Heart left ventricle (tissue), 16 donors: ENCODE measurements at regions of chr11 and their contacts with region 1.

Region 1: DNA sequence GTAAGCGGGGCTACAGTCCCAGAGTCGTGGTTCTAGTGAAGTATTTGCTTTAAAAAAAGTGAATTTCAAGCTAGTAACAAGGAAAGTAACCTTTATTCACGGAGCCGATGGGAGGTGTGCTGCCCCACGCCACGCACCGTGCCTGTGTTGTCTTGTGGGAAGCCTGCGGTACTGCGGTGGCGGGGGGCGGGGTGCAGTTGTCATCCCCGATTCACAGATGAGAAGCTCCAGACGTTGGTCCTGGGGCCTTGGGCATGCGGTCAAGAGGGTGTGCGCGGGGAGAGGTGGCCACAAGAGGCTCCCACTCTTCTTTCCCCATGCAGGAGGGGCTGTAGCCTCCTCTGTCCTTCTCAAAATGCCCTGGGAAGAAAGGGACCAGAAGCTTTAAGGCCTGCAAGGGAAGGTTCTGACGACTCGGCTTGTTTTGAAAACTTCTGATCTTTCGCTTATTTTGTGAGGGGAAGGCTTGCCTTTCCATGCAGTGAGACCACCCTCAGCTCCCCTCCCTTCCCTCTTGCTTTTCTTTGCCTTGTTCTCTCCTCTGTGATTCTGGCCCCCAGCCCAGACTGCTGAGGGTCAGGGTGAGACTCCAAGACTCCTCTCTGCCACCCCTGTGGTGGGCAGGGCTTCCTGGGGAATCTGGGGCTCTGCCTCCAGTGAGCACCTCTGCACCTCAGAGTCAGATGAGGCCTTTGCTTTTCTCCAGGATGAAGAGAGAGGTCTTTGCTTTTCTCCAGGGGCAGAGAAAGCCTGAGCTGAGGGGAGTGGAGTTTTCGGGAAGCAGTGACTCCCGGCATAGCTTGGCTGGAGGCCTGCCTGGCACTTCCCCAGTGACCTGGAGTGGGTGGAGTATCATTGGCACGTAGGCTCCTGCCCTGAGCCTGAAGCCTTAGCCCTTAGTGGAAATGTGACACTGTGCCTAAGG is 6.2 kb downstream of the GLB1L3 start:
- DNase-seq: peak in 1 of 5 donors; percentile 45
- ATAC-seq: peak in 3 of 4 donors; percentile 47 to 76 (median 72)
- H3K4me3 ChIP-seq: no peak overlapping the region
- H3K27ac ChIP-seq: no peak overlapping the region
- H3K4me1 ChIP-seq: peaks cover 0 to 2% (median 0%) of the 10 kb centered on the region in 12 donors
- H3K27me3 ChIP-seq: peaks cover 4 to 39% (median 15%) of the 10 kb centered on the region in 9 donors
- CTCF ChIP-seq: no peak
- POLR2A ChIP-seq: no peak

Region 2: DNA sequence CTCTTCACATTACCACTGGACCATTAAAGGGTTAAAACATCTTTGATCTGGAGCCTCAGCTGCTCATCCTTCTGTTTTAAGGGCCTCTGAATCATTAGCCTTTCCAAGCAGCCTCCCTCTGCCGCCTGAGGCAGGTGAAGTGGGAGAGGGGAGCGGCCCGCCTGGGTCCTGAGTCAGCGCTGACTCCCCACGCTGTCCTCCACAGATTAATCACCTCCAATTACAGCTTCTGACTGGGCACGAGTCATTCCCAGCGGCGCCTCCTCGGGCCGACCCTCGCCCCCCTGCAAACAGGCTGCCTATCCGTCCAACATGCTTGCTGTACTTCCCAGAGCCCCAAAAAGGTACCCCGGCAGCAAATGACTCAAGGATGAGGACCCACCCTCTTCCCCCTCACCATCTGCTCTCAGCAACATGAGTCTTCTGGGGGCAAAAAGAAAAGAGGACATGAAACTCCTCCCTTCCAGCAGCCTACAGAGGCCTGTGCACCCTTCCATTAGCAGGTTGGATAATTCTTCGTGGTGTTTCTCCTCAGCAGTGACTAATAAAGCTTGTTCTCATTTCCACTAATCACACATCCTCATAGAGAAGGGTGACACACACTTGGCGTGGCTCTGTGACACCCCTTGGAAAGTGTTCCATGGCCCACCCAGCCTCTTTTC is 257.8 kb before region 1 on chr11:
- intact Hi-C with region 1: no loop called
- DNase-seq: peak in 1 of 5 donors; percentile 44
- ATAC-seq: no peak
- H3K4me3 ChIP-seq: no peak overlapping the region
- H3K27ac ChIP-seq: no peak overlapping the region
- H3K4me1 ChIP-seq: peaks cover 0 to 25% (median 4%) of the 10 kb centered on the region in 12 donors
- H3K27me3 ChIP-seq: no peaks in the 10 kb centered on the region
- CTCF ChIP-seq: no peak
- POLR2A ChIP-seq: no peak

Region 3: DNA sequence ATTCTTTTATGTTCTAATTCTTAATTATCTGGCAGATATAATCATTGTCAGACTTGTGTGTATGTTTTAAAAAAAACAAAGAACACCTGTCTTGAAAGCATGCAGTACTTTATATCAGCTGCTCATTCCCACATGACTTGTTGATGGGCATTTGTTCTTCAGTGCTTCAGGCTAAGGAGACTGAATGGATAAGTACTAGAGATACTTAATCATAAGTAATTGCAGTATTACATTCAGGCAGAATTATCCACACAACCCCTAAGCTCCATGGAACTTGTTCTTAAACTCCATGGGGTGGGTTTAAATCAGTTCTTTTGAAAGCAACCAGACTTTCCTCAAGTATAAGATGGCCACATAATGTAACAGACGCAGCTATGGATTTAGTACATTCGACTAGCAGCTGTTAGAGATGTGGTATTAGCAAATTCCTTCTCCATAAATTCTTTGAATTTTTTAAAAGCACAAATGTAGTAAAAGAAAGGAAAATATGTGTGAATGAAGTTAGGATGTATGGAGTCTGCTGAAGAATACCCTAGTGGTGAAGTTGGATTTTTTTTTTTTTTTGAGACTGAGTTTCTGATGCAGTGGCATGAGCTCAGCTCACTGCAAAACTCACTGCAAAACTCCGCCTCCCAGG is 210.5 kb before region 1 on chr11:
- intact Hi-C with region 1: no loop called
- DNase-seq: no peak
- ATAC-seq: no peak
- H3K4me3 ChIP-seq: no peak overlapping the region
- H3K27ac ChIP-seq: no peak overlapping the region
- H3K4me1 ChIP-seq: peaks cover 0 to 30% (median 11%) of the 10 kb centered on the region in 12 donors
- H3K27me3 ChIP-seq: peaks cover 0 to 14% (median 0%) of the 10 kb centered on the region in 9 donors
- CTCF ChIP-seq: peak in 3 of 12 donors; percentile 5 to 23 (median 17)
- POLR2A ChIP-seq: no peak

Region 4: GRCh38 chr11:134331354-134332188 is 49.2 kb after region 1 on chr11 and contains the start of gene GLB1L2:
- intact Hi-C with region 1: no loop called
- DNase-seq: peak; percentile 58 to 88 (median 64)
- ATAC-seq: peak; percentile 65 to 94 (median 90)
- H3K4me3 ChIP-seq: peak within 1 kb of the TSS; percentile 9 to 62 (median 50)
- H3K27ac ChIP-seq: peak within 1 kb of the TSS in 1 of 12 donors; percentile 62
- H3K4me1 ChIP-seq: peaks cover 0 to 21% (median 12%) of the 10 kb centered on the region in 12 donors
- H3K27me3 ChIP-seq: peaks cover 0 to 40% (median 10%) of the 10 kb centered on the region in 9 donors
- CTCF ChIP-seq: no peak
- POLR2A ChIP-seq: no peak
- total RNA-seq, gene GLB1L2: 0.19 to 1.3 (median 0.37) TPM in 7 of 9 donors, not detected in the others

Region 5: DNA sequence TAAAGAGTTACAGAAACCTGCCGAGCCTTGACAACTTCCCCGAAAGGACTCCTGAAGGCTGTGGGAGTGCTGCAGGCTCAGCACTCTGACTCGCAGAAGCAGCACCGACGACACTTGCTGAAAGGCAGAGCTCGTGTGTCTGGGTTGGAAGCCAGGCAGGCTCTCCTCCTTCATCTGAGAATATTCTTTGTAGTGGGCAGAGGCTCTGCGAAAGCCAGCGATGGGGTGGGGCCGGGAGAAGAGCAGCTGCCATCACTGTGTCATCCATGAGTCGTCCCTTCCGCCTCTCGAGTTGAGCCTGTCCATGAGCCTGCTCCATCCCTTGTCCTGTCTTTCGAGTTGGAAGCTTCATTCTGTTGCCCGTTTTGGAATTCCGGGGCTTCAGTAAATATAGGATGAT is 61.3 kb after region 1 on chr11:
- intact Hi-C with region 1: loop called in 2 of 10 experiments (anchors 1 to 2 kb)
- DNase-seq: no peak
- ATAC-seq: no peak
- H3K4me3 ChIP-seq: no peak overlapping the region
- H3K27ac ChIP-seq: no peak overlapping the region
- H3K4me1 ChIP-seq: no peaks in the 10 kb centered on the region
- H3K27me3 ChIP-seq: peaks cover 0 to 22% (median 0%) of the 10 kb centered on the region in 9 donors
- CTCF ChIP-seq: no peak
- POLR2A ChIP-seq: no peak